Left colon (tissue), 2 donors: ENCODE measurements at regions of chr19 and their contacts with region 1.

Region 1: GRCh38 chr19:43446746-43447489 is 18.5 kb downstream of the LYPD3 start:
- DNase-seq: peak; percentile 60 to 70
- ATAC-seq: peak; percentile 90

Region 2: DNA sequence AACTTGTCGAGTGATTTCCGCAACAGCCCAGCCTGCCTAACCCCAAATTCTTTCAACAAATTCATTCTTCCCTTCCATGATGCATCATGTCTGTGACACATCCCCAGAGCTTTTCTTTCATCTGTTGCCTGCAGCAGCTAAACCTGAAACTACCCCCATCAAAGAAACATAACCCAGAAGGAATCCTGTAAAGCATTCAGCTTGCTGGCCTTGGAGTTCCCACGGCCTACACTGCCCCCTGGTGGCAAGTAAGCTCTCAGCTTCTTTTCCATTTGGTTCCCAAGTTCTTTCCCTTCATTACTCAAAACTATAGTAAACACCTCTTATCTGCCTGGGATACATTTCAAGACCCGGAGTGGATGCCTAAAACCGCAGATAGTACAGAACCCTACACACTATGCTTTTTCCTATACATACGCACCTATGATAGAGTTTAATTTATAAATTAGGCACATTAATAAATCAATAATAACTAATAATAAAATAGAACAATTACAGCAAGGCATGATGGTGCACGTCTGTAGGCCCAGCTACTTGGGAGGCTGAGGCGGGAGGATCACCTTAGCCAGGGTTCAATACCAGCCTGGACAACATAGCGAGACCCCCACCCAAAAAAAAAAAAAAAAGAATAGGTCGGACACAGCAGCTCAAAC is 72.6 kb after region 1 on chr19:
- intact Hi-C with region 1: loop called (anchors 2 to 5 kb)
- DNase-seq: peak; percentile 60 to 85
- ATAC-seq: peak; percentile 66

Region 3: DNA sequence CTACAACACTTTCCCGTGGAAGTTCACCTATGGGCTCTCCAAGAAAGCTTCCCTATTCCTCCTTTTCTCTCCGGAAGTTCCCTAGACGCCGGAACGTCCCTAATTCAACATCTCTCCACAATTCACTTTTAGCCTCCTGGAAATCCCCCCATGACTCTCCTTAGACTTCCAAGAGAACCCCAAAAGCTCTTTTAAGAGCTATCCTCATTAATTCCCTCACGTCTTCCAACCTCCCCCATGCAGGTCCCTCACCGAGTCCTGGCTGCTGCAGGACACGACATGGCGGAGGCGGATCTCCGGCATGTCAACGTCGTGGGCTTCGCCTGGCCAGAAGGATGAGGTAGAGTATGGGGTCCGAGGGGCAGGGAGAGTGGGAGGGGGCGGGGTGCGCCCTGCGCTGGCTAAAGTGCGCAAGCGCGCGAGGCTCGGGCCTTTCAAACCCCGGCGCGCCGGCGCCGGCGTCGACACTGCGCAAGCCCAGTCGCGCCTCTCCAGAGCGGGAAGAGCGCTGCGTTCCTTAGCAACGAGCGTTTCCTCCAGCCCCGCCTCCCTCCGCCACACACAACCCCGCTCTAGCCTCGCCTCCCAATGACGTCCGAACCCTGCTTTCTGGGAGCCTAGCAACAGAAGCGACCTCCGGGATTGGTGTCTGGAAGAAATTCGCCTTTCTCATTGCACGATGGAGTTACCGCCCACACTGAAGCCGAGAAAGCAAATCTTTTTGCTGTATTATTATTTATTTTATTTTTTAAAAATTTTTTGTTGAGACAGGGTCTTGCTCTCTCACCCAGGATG is 128.4 kb after region 1 on chr19 and contains the starts of genes PINLYP and XRCC1:
- intact Hi-C with region 1: no loop called
- DNase-seq: peak; percentile 98
- ATAC-seq: peak; percentile 99
- total RNA-seq, gene PINLYP: 0.95 to 1.6 TPM
- total RNA-seq, gene XRCC1: 16.5 to 17.3 TPM

Region 4: GRCh38 chr19:43651758-43652545 is 205.0 kb after region 1 on chr19:
- intact Hi-C with region 1: loop called in 1 of 2 experiments (anchors 10 kb)
- DNase-seq: peak in 1 of 2 donors; percentile 64
- ATAC-seq: peak; percentile 86